Activated CD4-positive, alpha-beta T cell treated with anti-CD3 and anti-CD28 coated beads for 36 hours (primary cell): ENCODE measurements at regions of chrX and their contacts with region 1.

Region 1: DNA sequence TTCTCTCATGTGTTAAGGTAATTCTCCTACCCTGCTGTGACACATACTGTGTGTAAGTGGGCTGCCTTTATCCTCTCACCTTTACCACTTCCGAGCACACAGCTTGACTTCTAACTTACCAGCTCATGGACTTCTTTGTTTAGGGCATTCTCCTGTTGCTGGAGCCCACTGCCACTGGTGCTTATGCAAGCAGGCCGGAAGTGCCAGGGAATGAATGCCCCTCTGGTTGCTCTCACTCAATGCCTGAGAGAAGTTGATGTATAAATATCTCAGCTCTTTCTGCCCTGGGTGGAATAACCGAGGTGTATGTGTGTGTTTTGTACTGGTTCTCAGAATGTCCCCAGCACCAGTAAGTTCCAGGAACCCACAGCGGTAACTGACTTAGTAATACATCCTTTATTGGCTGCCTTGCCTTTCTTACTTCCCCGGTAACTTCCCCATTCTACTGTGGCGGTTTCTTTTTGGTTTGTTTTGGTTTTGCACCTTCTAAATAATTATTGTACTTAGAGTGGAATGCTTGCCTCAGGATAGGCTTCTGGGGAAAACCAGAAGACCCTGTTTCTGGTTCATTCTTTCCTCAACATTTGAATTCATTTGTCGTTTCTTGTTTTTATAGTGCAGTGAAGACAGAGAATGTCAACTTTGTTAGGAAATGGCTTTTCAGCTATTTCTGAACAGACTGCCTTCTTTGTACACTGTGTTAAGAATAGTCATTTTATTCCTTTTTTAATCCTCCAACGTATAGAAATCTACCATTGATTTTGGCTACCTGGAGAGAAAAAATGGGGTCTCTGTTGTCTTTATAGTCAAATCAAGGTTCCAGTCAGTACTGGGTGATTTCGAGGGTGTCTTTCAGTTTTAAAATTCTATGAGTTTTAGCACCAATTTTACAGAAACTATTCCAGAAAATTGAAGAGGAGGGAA is 45.4 kb downstream of the CXorf58 start:
- DNase-seq: peak; percentile 54
- ATAC-seq: peak; percentile 92
- H3K4me3 Mint-ChIP-seq: peak overlapping the region; percentile 69
- H3K27ac Mint-ChIP-seq: peak overlapping the region; percentile 93
- H3K4me1 Mint-ChIP-seq: peaks cover 17% of the 10 kb centered on the region
- H3K27me3 Mint-ChIP-seq: no peaks in the 10 kb centered on the region

Region 2: GRCh38 chrX:24014388-24015018 is 61.3 kb after region 1 on chrX:
- CTCF ChIA-PET with region 1: interaction called, 3 read pairs
- POLR2A ChIA-PET with region 1: no interaction called
- intact Hi-C with region 1: loop called (anchors 2 to 5 kb)
- DNase-seq: peak; percentile 77
- ATAC-seq: peak; percentile 92
- H3K4me3 Mint-ChIP-seq: peak overlapping the region; percentile 62
- H3K27ac Mint-ChIP-seq: peak overlapping the region; percentile 93
- H3K4me1 Mint-ChIP-seq: peaks cover 42% of the 10 kb centered on the region
- H3K27me3 Mint-ChIP-seq: no peaks in the 10 kb centered on the region

Region 3: GRCh38 chrX:24024819-24025740 is 71.8 kb after region 1 on chrX:
- CTCF ChIA-PET with region 1: no interaction called
- POLR2A ChIA-PET with region 1: no interaction called
- intact Hi-C with region 1: loop called (anchors 1 to 2 kb)
- DNase-seq: peak; percentile 91
- ATAC-seq: peak; percentile 89
- H3K4me3 Mint-ChIP-seq: peak overlapping the region; percentile 83
- H3K27ac Mint-ChIP-seq: peak overlapping the region; percentile 58
- H3K4me1 Mint-ChIP-seq: peaks cover 19% of the 10 kb centered on the region
- H3K27me3 Mint-ChIP-seq: no peaks in the 10 kb centered on the region